Pancreas (tissue), 10 donors: ENCODE measurements at regions of chrX and their contacts with region 1.

Region 1: DNA sequence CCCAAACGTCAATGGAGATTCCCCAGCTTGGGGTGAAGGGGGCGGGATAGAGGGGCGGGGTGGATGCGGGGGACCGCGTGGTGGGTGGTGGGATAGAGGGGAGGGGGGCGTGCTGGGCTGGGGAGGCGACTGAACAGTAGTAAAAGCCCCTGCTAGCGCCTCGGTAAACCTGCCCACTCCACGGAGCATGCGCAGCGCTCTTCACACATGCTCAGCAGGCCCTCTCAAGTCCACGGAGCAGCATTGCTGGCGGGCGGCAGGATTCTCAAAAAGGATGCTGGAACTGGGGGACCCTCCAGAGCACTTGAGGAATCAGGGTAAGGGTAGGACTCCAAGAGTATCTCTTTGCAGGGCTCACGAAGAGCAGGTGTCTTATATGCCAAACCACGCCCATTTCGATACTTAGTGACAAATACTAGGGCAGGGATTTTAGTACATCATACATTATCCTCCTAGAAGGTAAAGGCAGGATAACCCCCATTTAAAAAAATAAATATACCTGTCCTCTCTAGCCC is 378 bp upstream of the RPS6KA6 start:
- DNase-seq: peak; percentile 26 to 79 (median 44)
- ATAC-seq: peak; percentile 72 to 84 (median 82)
- H3K4me3 ChIP-seq: peak overlapping the region; percentile 23 to 50 (median 38)
- H3K27ac ChIP-seq: no peak overlapping the region
- H3K4me1 ChIP-seq: no peaks in the 10 kb centered on the region
- H3K27me3 ChIP-seq: peaks cover 0 to 7% (median 4%) of the 10 kb centered on the region in 4 donors
- CTCF ChIP-seq: no peak

Region 2: DNA sequence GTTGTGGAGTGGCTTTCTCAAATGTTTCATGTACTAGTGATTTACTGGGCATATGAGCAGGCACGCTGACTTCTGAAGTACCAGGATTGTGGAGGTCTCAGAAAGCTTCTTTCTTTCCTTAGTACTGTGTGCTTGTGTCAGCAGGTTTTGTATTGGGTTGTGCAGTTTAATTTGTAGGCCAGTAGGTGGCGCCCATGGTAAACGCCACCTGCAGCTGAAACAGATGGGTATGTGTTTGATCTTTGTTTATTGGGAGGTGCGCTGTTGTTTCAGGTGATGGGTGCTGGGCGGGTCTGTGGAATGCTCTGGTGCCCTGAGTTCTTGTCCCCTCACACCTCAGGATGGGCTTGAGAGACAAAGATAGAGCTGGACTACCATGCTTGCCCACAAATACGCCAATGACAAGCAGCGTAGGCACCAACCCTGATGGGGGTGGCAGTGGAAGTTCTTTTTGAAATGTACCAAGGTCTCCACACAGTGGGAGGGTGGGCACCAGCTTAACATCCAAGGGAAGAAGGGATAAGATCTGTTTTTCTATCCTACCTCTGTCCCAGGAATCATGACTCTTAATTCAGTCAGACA is 141.9 kb before region 1 on chrX:
- intact Hi-C with region 1: loop called in 1 of 3 experiments (anchors 10 kb)
- DNase-seq: peak in 1 of 6 donors; percentile 19
- ATAC-seq: peak in 3 of 4 donors; percentile 69 to 85 (median 73)
- H3K4me3 ChIP-seq: no peak overlapping the region
- H3K27ac ChIP-seq: no peak overlapping the region
- H3K4me1 ChIP-seq: no peaks in the 10 kb centered on the region
- H3K27me3 ChIP-seq: peaks cover 0 to 13% (median 5%) of the 10 kb centered on the region in 4 donors
- CTCF ChIP-seq: peak; percentile 54 to 70 (median 66)